Head of caudate nucleus (tissue), 42 donors: ENCODE measurements at regions of chr16 and their contacts with region 1.

Region 1: GRCh38 chr16:17467923-17468540 is 2.7 kb downstream of the XYLT1 start:
- DNase-seq: peak; percentile 62 to 93 (median 83)

Region 2: DNA sequence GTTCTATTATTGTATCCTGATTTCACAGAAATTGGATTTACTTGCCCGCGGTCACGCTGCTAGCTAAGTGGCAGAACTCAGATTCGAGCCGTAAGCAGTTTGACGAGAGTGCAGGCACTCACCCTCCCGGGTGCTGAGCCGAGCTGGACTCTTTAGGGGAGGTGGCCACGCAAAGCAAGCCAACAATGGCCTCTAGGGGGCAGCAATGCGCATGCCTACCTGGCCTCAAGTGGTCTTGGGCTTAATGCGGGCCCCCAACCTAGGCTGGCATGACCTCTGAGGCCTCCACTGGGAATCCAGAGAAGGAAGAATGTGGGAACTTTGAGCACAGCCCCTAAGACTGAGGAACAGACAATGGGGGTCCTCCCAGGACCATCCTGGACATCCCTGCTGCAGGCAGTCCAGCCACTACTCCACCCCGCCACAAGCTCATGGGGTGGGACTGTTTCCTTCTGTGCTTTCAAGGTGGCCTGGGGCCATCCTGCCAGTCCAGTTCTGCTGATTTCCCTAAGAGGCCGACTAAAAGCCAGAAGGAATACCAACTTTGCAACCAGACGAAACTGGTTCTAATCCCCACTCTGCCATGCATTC is 273.7 kb before region 1 on chr16:
- intact Hi-C with region 1: loop called (anchors 5 kb)
- DNase-seq: peak; percentile 30 to 81 (median 58)

Region 3: DNA sequence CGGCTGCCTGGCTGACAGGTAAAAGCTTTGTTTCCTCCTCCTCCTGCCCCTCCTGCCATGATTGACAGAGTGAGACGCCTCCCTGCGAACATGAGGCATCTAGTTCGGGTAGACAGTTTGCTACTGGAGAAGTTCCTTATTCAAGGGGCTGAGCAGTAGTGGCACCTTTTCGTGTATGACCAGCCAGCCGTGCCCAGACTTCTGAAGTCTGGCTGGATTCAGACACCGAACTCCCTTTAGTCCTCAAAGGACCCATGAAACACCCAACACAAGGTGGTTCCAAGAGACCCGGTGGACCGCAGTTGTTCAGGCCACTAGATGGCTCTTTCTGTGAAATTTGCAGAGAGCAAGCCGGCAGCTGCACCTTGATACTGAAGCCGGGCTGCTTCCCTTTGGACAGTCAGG is 190.1 kb before region 1 on chr16:
- intact Hi-C with region 1: loop called (anchors 5 kb)
- DNase-seq: peak in 41 of 42 donors; percentile 15 to 80 (median 52)

Region 4: GRCh38 chr16:17313085-17313611 is 154.9 kb before region 1 on chr16:
- intact Hi-C with region 1: no loop called
- DNase-seq: peak in 39 of 42 donors; percentile 3 to 63 (median 37)

Region 5: DNA sequence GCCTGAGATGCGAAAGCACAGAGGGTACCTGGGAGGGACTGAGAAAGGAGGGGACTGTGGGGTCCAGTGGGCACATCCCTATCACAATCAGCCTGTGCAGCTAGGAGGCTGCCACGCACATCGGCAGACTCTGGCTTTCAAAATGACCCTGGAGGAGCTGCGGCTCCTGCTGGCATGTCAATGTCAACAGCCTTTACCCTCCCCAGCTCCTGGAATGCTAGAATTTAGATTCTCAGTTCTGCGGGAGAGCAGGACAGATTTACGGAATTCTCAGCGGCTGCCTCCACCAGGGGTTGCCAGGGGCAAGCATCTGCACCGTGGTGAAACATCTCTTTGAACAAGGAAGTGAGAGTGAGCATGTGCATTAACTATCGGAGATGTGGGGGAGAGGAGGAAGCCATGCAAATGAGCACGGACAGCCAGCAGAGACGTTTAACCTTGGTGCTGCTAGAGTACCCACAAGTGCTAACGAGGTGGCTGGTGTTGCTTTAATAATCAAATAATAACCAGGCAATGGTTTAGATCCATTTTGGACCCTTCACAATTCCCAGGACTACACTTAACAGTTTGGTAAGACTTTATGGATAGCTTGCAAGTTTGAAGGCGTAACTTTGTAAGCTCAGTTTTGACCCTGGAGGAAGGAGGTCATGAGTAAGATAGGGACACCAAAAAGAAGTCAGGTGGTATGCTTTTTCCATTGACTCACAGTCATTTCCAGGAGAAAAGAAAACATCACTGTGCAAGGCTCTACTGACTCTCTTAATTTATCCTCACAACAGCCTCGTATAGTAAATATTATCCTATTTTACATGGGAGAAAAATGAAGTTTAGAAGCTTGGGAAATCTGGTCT is 51.3 kb before region 1 on chr16:
- intact Hi-C with region 1: loop called (anchors 5 kb)
- DNase-seq: peak in 30 of 42 donors; percentile 11 to 65 (median 39)